Mammary epithelial cell (primary cell): ENCODE measurements at regions of chr2 and their contacts with region 1.

Region 1: DNA sequence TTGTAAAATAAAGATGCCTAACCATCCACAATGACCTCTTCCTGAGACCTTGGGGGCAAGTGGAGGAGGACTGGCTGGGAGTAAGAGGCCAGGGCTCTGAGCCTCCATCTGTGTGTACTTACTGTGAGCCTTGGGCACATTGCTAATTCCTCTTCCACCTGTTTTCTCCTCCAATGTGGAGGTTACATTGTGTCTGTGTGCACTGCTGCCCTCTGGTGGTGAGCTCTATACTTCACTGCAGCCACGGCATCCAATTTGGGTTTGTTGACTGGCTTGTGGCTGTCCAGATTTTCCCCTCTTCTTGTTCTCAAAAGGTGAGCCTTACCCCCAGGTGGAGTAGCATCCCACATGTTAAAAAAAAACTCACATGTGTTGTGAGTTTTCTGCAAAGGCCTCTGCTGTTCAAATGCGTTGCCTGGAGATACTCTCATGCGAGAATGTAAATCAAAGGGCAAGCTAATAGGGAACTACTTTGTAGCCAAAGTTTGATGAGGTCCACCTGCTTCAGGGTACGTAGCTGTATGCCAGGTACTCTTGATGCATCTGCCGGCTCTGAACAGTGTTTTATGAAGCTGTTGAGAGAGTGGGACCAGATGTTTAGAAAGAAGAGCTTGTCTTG is 80.8 kb downstream of the APOB start:
- DNase-seq: peak; percentile 46
- H3K4me3 ChIP-seq: no peak overlapping the region
- H3K27ac ChIP-seq: no peak overlapping the region
- H3K4me1 ChIP-seq: no peaks in the 10 kb centered on the region
- H3K27me3 ChIP-seq: peaks cover 2% of the 10 kb centered on the region
- CTCF ChIP-seq: peak; percentile 70 to 84

Region 2: GRCh38 chr2:20682167-20682920 is 280.7 kb before region 1 on chr2:
- CTCF ChIA-PET with region 1: no interaction called
- dilution Hi-C with region 1: no loop called
- in situ Hi-C with region 1: no loop called
- intact Hi-C with region 1: loop called (anchors 5 kb)
- DNase-seq: no peak
- H3K4me3 ChIP-seq: no peak overlapping the region
- H3K27ac ChIP-seq: no peak overlapping the region
- H3K4me1 ChIP-seq: no peaks in the 10 kb centered on the region
- H3K27me3 ChIP-seq: no peaks in the 10 kb centered on the region
- CTCF ChIP-seq: peak; percentile 24 to 45

Region 3: GRCh38 chr2:20781656-20782265 is 181.3 kb before region 1 on chr2:
- CTCF ChIA-PET with region 1: interaction called, 18 read pairs
- dilution Hi-C with region 1: no loop called
- in situ Hi-C with region 1: loop called (anchors 5 to 10 kb)
- intact Hi-C with region 1: loop called (anchors 1 kb)
- DNase-seq: peak; percentile 28
- H3K4me3 ChIP-seq: no peak overlapping the region
- H3K27ac ChIP-seq: no peak overlapping the region
- H3K4me1 ChIP-seq: no peaks in the 10 kb centered on the region
- H3K27me3 ChIP-seq: no peaks in the 10 kb centered on the region
- CTCF ChIP-seq: peak; percentile 86 to 88

Region 4: GRCh38 chr2:20852139-20852538 is 110.9 kb before region 1 on chr2:
- CTCF ChIA-PET with region 1: no interaction called
- dilution Hi-C with region 1: no loop called
- in situ Hi-C with region 1: no loop called
- intact Hi-C with region 1: loop called (anchors 10 kb)
- DNase-seq: no peak
- H3K4me3 ChIP-seq: no peak overlapping the region
- H3K27ac ChIP-seq: no peak overlapping the region
- H3K4me1 ChIP-seq: no peaks in the 10 kb centered on the region
- H3K27me3 ChIP-seq: no peaks in the 10 kb centered on the region
- CTCF ChIP-seq: no peak

Region 5: DNA sequence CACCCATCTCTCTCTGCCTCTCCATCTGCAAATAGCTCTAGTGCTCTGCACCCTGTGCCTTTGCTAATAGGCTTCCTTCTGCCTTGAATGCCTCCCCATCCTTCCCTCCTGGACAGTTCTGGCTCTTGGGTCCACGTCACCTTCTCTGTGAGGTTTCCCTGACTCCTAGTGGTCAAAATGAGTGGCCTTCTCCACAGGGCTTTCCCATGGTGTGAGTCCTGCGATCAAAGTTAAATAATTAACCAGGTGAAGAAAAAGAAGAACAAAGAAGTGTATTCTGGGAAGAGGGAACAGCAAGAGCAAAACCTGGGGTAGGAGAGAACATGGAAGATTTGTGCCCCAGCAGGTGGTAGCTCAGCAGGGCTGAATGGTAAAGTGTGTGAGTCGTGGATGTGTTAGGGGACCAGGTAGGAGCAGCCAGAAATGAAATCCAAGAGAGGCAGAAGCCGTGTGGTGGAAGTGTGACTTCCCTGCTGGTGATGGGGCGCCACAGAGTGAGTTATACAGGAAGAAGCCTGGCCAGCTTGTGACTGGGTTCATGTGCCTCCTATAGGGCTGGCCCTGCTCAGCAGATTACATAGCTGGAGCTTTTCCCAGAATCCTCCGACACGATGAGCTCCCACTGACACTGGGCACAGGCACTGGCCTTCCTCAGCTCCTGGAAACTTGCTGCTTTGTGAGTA is 46.3 kb before region 1 on chr2:
- CTCF ChIA-PET with region 1: no interaction called
- dilution Hi-C with region 1: no loop called
- in situ Hi-C with region 1: no loop called
- intact Hi-C with region 1: loop called (anchors 5 kb)
- DNase-seq: peak; percentile 13
- H3K4me3 ChIP-seq: no peak overlapping the region
- H3K27ac ChIP-seq: no peak overlapping the region
- H3K4me1 ChIP-seq: peaks cover 29% of the 10 kb centered on the region
- H3K27me3 ChIP-seq: no peaks in the 10 kb centered on the region
- CTCF ChIP-seq: peak; percentile 9 to 37

Region 6: GRCh38 chr2:21118302-21118920 is 155.4 kb after region 1 on chr2:
- CTCF ChIA-PET with region 1: no interaction called
- dilution Hi-C with region 1: no loop called
- in situ Hi-C with region 1: no loop called
- intact Hi-C with region 1: no loop called
- DNase-seq: peak; percentile 11
- H3K4me3 ChIP-seq: no peak overlapping the region
- H3K27ac ChIP-seq: no peak overlapping the region
- H3K4me1 ChIP-seq: no peaks in the 10 kb centered on the region
- H3K27me3 ChIP-seq: no peaks in the 10 kb centered on the region
- CTCF ChIP-seq: peak; percentile 35 to 62